ENCODE measurements at regions of chr22 and their contacts with region 1.

Region 1: GRCh38 chr22:32985899-32986765 is 72.0 kb downstream of the SYN3 start:
- DNase-seq: peak; percentile 70
- ATAC-seq: peak; percentile 83
- H3K4me3 Mint-ChIP-seq: no peak overlapping the region
- H3K27ac Mint-ChIP-seq: no peak overlapping the region
- H3K4me1 Mint-ChIP-seq: no peaks in the 10 kb centered on the region
- H3K27me3 Mint-ChIP-seq: no peaks in the 10 kb centered on the region

Region 2: DNA sequence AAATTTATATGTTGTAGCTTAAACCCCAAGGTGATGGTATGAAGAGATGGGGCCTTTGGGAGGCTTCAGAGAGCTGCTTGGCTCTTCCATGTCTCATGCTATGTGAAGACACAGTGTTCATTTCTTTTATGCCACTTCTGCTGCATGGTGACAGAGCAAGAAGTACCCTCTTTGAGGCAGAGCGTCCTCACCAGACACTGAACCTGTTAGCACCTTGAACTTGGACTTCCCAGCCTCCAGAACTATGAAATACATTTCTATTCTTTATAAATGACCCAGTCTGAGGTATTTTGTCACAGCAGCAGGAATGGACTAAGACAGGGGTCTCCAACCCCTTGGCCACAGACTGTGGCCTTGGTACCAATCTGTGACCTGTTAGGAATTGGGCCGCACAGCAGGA is 331.1 kb before region 1 on chr22:
- CTCF ChIA-PET with region 1: interaction called, 4 read pairs
- POLR2A ChIA-PET with region 1: no interaction called
- intact Hi-C with region 1: loop called (anchors 1 to 5 kb)
- DNase-seq: no peak
- ATAC-seq: no peak
- H3K4me3 Mint-ChIP-seq: no peak overlapping the region
- H3K27ac Mint-ChIP-seq: no peak overlapping the region
- H3K4me1 Mint-ChIP-seq: no peaks in the 10 kb centered on the region
- H3K27me3 Mint-ChIP-seq: peaks cover 10% of the 10 kb centered on the region

Region 3: GRCh38 chr22:32660292-32660691 is 325.8 kb before region 1 on chr22:
- CTCF ChIA-PET with region 1: interaction called, 4 read pairs
- POLR2A ChIA-PET with region 1: no interaction called
- intact Hi-C with region 1: loop called (anchors 1 to 5 kb)
- DNase-seq: peak; percentile 74
- ATAC-seq: peak; percentile 30
- H3K4me3 Mint-ChIP-seq: no peak overlapping the region
- H3K27ac Mint-ChIP-seq: no peak overlapping the region
- H3K4me1 Mint-ChIP-seq: no peaks in the 10 kb centered on the region
- H3K27me3 Mint-ChIP-seq: peaks cover 10% of the 10 kb centered on the region

Region 4: DNA sequence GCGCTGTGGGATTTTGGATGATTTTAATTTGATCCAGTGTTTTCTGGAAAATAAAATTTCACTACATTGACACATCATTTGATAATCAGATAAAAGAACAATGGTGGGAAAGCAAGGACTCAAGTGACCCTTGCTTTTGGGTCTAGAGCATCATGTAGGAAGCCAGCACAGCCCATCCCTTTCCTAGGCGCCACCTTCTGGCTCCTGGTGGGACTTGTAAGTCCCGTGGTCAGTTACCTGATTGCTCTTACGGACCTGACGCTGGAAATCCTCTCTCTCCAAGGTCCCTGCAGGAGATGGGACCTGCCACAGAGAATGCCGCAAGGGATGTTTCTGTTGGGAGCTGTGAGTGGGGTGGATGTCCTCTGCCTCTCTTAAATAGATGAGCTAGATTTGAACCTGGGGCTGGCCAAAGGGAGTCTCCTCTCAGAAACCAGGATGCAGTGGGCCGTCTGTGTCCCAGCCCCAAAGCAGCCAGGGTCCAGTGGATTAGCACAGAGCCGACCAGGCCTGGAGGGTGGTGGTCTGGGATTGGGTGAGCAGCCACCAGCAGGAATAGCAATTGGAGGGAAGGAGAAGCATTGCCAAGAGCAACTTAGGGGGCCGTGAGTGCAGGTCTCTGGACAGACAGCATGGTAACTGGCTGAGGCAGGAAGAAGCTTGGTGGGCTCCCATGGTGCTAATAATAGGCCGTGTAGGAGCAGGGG is 163.0 kb before region 1 on chr22:
- CTCF ChIA-PET with region 1: no interaction called
- POLR2A ChIA-PET with region 1: no interaction called
- intact Hi-C with region 1: loop called in 1 of 2 experiments (anchors 10 kb)
- DNase-seq: peak; percentile 31
- ATAC-seq: no peak
- H3K4me3 Mint-ChIP-seq: no peak overlapping the region
- H3K27ac Mint-ChIP-seq: no peak overlapping the region
- H3K4me1 Mint-ChIP-seq: no peaks in the 10 kb centered on the region
- H3K27me3 Mint-ChIP-seq: no peaks in the 10 kb centered on the region

Region 5: GRCh38 chr22:32926600-32926999 is 59.5 kb before region 1 on chr22:
- CTCF ChIA-PET with region 1: no interaction called
- POLR2A ChIA-PET with region 1: no interaction called
- intact Hi-C with region 1: loop called (anchors 1 to 5 kb)
- DNase-seq: peak; percentile 29
- ATAC-seq: no peak
- H3K4me3 Mint-ChIP-seq: no peak overlapping the region
- H3K27ac Mint-ChIP-seq: no peak overlapping the region
- H3K4me1 Mint-ChIP-seq: no peaks in the 10 kb centered on the region
- H3K27me3 Mint-ChIP-seq: peaks cover 6% of the 10 kb centered on the region

Measured in activated CD4-positive, alpha-beta T cell treated with anti-CD3 and anti-CD28 coated beads for 36 hours (primary cell).